Caco-2 (cell line): ENCODE measurements at regions of chr3 and their contacts with region 1.

Region 1: DNA sequence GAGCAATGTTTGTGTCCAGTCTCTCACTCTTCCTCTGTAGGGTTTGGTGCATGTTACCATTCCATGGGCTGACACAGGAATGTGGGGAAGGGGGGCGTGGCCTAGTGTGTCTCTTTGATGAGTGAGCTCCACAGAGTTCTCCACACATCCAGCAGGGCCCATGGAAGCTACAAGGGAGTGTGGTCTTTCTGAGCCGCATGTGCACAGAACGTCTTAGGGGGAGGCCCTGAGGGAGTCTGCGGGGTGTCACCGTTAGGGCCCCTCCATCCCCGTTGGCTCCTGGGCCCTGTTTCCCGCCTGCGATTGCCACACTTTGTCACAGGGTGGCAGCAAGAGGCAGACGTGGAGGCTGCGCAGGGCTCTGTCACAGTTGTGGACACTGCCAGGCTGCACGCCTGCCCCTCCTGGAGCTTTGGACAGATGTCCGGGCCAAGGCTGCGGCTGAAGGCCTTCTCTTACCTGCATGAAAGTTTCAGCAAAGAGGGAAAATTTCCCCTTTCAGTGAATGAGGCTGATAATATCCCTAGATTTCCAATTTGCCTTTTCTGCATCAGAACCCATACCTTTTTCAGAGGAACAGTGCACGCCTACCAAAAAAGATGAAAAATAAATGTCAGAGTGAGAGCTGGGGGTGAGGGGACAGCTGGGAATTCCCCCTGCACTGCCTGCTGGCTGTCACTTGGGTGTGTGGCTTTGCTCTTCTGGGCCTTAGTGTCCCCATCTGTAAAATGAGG is 24.3 kb downstream of the CACNA2D3 start:
- DNase-seq: peak; percentile 61 to 69
- H3K4me3 ChIP-seq: no peak overlapping the region
- H3K4me3 Mint-ChIP-seq: no peak overlapping the region
- H3K27ac Mint-ChIP-seq: no peak overlapping the region
- H3K4me1 ChIP-seq: no peaks in the 10 kb centered on the region
- H3K4me1 Mint-ChIP-seq: no peaks in the 10 kb centered on the region
- H3K27me3 ChIP-seq: no peaks in the 10 kb centered on the region
- H3K27me3 Mint-ChIP-seq: peaks cover 23% of the 10 kb centered on the region
- CTCF ChIP-seq: peak; percentile 74 to 86

Region 2: DNA sequence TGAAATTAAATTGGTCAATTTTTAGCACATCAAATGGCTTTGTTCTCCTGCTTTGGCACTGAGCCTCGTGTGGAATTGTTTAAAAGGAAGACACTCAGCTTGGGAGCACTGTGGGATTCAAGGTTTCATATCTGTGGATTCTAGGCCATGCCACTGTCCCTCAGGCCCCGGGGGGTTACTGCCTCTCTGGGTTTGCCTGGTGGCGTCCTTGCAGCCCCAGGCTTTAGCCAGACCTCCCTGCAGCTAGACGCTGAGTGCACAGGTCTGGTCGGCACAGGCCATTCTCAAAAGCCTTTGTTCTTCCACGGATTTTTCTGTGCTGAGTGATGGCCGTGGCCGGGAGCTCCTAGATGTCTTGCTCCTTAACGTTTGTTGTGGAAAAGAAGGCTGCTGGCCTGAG is 51.9 kb after region 1 on chr3:
- CTCF ChIA-PET with region 1: no interaction called
- POLR2A ChIA-PET with region 1: no interaction called
- intact Hi-C with region 1: no loop called
- DNase-seq: no peak
- H3K4me3 ChIP-seq: no peak overlapping the region
- H3K4me3 Mint-ChIP-seq: no peak overlapping the region
- H3K27ac Mint-ChIP-seq: no peak overlapping the region
- H3K4me1 ChIP-seq: no peaks in the 10 kb centered on the region
- H3K4me1 Mint-ChIP-seq: no peaks in the 10 kb centered on the region
- H3K27me3 ChIP-seq: peaks cover 2% of the 10 kb centered on the region; the same call in 1 of the 2 replicates
- H3K27me3 Mint-ChIP-seq: peaks cover 16% of the 10 kb centered on the region
- CTCF ChIP-seq: no peak

Region 3: DNA sequence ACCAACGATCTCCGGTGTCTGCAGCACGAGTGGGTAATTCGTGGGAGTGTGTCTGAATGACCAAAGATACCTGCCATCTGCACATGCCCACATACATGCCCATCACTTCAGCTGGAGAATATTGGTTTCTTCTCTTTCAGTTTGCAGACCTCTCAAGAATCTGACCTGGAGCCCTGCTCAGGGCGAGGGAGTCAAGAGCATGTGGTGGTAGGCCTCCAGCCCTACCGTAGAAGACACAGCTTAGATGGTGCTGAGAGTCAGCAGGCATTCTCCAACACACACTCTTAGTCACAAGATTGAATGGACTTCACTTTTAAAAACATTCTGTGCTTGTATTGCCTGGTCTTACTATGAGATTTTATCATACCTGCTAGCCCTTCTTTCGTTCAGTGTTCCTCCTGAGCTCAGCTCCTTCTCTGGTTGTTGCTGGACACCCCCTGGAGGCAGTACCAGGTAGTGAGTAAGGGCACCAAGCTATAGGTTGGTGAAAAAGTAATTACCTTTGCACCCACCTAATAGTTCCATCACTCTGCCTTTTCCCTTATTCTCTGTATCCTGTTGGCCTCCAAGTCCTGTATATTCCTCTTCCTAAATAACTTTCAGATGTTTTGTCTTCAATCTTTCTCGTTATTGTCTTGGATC is 227.7 kb after region 1 on chr3:
- CTCF ChIA-PET with region 1: interaction called, 17 read pairs
- POLR2A ChIA-PET with region 1: no interaction called
- intact Hi-C with region 1: loop called (anchors 1 kb)
- DNase-seq: peak in 1 of 2 experiments; percentile 47
- H3K4me3 ChIP-seq: no peak overlapping the region
- H3K4me3 Mint-ChIP-seq: no peak overlapping the region
- H3K27ac Mint-ChIP-seq: no peak overlapping the region
- H3K4me1 ChIP-seq: no peaks in the 10 kb centered on the region
- H3K4me1 Mint-ChIP-seq: peaks cover 7% of the 10 kb centered on the region
- H3K27me3 ChIP-seq: 0 out of 2 replicates have a peak, but pooled peaks cover 1% of the 10 kb centered on the region
- H3K27me3 Mint-ChIP-seq: peaks cover 3% of the 10 kb centered on the region
- CTCF ChIP-seq: peak; percentile 38 to 69

Region 4: GRCh38 chr3:54421943-54422342 is 275.3 kb after region 1 on chr3:
- CTCF ChIA-PET with region 1: interaction called, 10 read pairs
- POLR2A ChIA-PET with region 1: no interaction called
- intact Hi-C with region 1: loop called (anchors 10 kb)
- DNase-seq: no peak
- H3K4me3 ChIP-seq: no peak overlapping the region
- H3K4me3 Mint-ChIP-seq: no peak overlapping the region
- H3K27ac Mint-ChIP-seq: no peak overlapping the region
- H3K4me1 ChIP-seq: no peaks in the 10 kb centered on the region
- H3K4me1 Mint-ChIP-seq: no peaks in the 10 kb centered on the region
- H3K27me3 ChIP-seq: 0 out of 2 replicates have a peak, but pooled peaks cover 1% of the 10 kb centered on the region
- H3K27me3 Mint-ChIP-seq: peaks cover 26% of the 10 kb centered on the region
- CTCF ChIP-seq: no peak

Region 5: DNA sequence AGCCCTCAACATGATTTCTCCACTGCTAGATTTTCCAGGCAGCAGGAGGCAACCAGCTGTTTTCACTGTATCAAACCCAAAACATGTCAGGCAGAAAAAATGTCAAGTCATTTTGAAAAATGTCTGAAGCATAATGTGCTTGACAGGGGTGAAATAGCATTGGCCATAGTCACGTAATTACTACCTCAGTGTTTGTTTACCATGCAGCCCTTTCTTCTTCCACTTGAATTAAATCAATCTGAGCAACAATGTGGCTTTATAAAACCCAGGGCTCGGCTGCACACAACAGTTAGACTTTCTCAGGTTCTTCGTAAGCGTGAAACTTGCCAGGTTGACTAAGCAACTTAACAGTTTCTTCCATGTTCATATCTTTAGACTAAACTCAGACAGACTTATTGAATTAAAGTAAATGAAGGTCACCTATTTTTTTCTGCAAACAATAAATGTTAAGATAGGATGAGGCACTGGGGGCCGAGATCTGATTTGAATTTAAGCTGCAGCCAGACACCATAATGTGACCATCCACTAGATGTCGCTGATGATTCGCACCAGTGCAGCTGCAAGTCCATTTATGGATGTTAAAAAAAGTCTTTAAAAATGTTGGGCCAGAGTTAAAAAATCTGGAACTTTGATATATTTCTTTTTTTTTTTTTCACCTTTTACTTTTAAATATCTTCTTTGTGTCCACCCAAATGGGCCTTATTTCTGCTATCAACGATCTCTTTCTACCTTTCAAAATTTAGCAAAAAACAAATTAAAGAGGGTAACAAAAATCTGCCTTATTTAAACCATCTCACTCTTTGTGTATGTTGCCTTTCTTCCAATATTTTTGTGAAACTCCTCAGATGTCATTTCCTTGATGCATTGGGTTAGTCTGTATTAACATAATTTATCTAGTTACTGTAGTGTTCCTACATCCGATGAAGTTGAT is 281.5 kb after region 1 on chr3:
- CTCF ChIA-PET with region 1: interaction called, 3 read pairs
- POLR2A ChIA-PET with region 1: no interaction called
- intact Hi-C with region 1: loop called (anchors 10 kb)
- DNase-seq: peak; percentile 55 to 66
- H3K4me3 ChIP-seq: no peak overlapping the region
- H3K4me3 Mint-ChIP-seq: no peak overlapping the region
- H3K27ac Mint-ChIP-seq: no peak overlapping the region
- H3K4me1 ChIP-seq: no peaks in the 10 kb centered on the region
- H3K4me1 Mint-ChIP-seq: no peaks in the 10 kb centered on the region
- H3K27me3 ChIP-seq: no peaks in the 10 kb centered on the region
- H3K27me3 Mint-ChIP-seq: peaks cover 7% of the 10 kb centered on the region
- CTCF ChIP-seq: peak; percentile 67 to 81

Region 6: GRCh38 chr3:55059027-55059629 is 912.5 kb after region 1 on chr3:
- CTCF ChIA-PET with region 1: no interaction called
- POLR2A ChIA-PET with region 1: no interaction called
- intact Hi-C with region 1: no loop called
- DNase-seq: no peak
- H3K4me3 ChIP-seq: no peak overlapping the region
- H3K4me3 Mint-ChIP-seq: no peak overlapping the region
- H3K27ac Mint-ChIP-seq: no peak overlapping the region
- H3K4me1 ChIP-seq: no peaks in the 10 kb centered on the region
- H3K4me1 Mint-ChIP-seq: no peaks in the 10 kb centered on the region
- H3K27me3 ChIP-seq: no peaks in the 10 kb centered on the region
- H3K27me3 Mint-ChIP-seq: peaks cover 18% of the 10 kb centered on the region
- CTCF ChIP-seq: no peak